MCF 10A (cell line): ENCODE measurements at regions of chr12 and their contacts with region 1.

Region 1: GRCh38 chr12:8609061-8609570 is 3.5 kb downstream of the AICDA start:
- DNase-seq: peak; percentile 55
- H3K4me3 Mint-ChIP-seq: peak overlapping the region; percentile 63
- H3K27ac Mint-ChIP-seq: no peak overlapping the region
- H3K4me1 Mint-ChIP-seq: peaks cover 10% of the 10 kb centered on the region
- H3K27me3 Mint-ChIP-seq: peaks cover 36% of the 10 kb centered on the region
- CTCF ChIP-seq: peak; percentile 75

Region 2: GRCh38 chr12:8549381-8549780 is 59.7 kb before region 1 on chr12:
- CTCF ChIA-PET with region 1: interaction called, 135 read pairs
- POLR2A ChIA-PET with region 1: no interaction called
- intact Hi-C with region 1: loop called (anchors 1 kb)
- DNase-seq: no peak
- H3K4me3 Mint-ChIP-seq: no peak overlapping the region
- H3K27ac Mint-ChIP-seq: no peak overlapping the region
- H3K4me1 Mint-ChIP-seq: peaks cover 2% of the 10 kb centered on the region
- H3K27me3 Mint-ChIP-seq: peaks cover 30% of the 10 kb centered on the region
- CTCF ChIP-seq: no peak

Region 3: DNA sequence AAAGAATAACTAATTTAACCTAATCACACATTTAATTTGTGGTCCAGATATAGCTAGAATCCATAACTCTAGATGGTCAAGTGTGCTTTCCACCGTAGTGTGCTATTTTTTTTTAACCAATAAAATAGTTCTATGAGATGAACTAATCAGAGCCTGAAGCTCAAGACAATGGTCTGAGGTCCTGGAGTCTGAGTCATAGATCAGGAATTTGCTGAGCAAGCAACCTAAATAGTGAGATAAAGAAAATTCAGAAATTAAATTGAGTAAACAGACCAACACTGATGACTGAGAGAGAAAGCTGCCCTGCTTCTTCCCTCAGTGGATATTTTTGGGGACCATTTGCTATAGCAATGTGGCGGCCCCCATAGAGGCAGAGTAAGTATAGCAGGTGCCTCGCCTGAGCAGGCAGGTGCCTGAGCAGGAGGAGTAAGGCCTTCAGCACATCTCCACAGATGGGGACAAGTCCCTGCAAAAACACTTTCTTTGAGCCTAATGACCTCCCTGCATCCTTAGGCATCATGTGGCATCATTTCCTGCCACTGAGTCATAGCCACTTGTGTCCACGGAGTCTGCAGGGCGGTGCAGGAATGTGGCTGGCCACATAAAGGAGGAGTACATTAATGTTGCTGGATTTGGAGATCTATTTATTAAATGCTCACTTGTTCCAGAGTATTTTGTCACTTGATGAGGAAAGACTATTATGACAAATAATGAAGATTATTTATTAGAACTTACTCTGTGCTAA is 54.5 kb before region 1 on chr12:
- CTCF ChIA-PET with region 1: interaction called, 32 read pairs
- POLR2A ChIA-PET with region 1: no interaction called
- intact Hi-C with region 1: no loop called
- DNase-seq: peak; percentile 35
- H3K4me3 Mint-ChIP-seq: no peak overlapping the region
- H3K27ac Mint-ChIP-seq: no peak overlapping the region
- H3K4me1 Mint-ChIP-seq: peaks cover 6% of the 10 kb centered on the region
- H3K27me3 Mint-ChIP-seq: no peaks in the 10 kb centered on the region
- CTCF ChIP-seq: no peak

Region 4: GRCh38 chr12:8590842-8591550 is 18.1 kb before region 1 on chr12:
- CTCF ChIA-PET with region 1: interaction called, 20 read pairs
- POLR2A ChIA-PET with region 1: no interaction called
- intact Hi-C with region 1: no loop called
- DNase-seq: peak; percentile 41
- H3K4me3 Mint-ChIP-seq: no peak overlapping the region
- H3K27ac Mint-ChIP-seq: no peak overlapping the region
- H3K4me1 Mint-ChIP-seq: no peaks in the 10 kb centered on the region
- H3K27me3 Mint-ChIP-seq: no peaks in the 10 kb centered on the region
- CTCF ChIP-seq: no peak

Region 5: DNA sequence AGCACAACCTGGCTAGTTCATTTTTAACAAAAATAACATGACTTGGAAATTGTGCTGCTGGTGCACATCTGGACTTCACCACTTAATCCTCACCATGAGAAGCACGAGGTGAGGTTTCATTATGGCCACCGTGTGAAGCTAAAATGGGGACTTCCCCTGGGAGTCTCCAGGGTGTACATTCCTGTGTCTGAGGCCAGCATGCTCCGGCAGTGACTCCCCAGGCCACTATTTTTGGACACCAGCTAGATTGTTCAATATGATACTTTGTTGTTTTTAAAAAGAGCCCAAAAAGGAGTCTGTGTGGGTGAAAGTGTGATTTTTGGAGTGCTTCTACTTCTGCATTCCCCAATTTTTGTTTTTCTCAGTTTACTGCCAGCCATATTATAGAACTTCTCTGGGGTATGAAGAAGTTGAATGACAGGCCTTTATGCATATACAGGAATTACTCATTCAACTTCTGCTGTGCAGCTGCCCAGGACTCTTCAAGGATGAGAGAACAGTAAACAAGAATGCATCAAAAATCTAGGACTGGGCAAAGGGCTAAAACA is 20.4 kb after region 1 on chr12:
- CTCF ChIA-PET with region 1: interaction called, 11 read pairs
- POLR2A ChIA-PET with region 1: no interaction called
- intact Hi-C with region 1: no loop called
- DNase-seq: peak; percentile 22
- H3K4me3 Mint-ChIP-seq: no peak overlapping the region
- H3K27ac Mint-ChIP-seq: no peak overlapping the region
- H3K4me1 Mint-ChIP-seq: peaks cover 11% of the 10 kb centered on the region
- H3K27me3 Mint-ChIP-seq: no peaks in the 10 kb centered on the region
- CTCF ChIP-seq: no peak

Region 6: DNA sequence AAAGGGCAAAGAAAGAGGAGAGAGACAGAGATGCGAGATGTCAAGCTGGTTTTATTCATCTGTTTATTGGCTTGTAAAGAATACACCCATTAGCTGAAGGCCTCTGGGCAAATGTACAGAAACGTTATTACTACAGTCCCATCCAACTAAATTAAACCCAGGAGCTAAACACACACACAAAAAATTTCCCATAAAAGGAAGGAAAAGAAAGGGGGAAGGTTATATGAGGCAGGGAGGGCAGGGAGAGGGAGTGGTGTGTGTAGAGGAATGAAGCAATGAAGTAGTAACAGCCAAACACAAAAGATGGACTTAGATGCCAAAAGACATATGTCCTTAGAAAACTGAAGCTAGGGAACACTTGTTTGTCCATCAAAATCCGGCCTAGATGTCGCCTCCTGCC is 56.6 kb after region 1 on chr12:
- CTCF ChIA-PET with region 1: no interaction called
- POLR2A ChIA-PET with region 1: no interaction called
- intact Hi-C with region 1: no loop called
- DNase-seq: no peak
- H3K4me3 Mint-ChIP-seq: no peak overlapping the region
- H3K27ac Mint-ChIP-seq: peak overlapping the region; percentile 4
- H3K4me1 Mint-ChIP-seq: peaks cover 5% of the 10 kb centered on the region
- H3K27me3 Mint-ChIP-seq: no peaks in the 10 kb centered on the region
- CTCF ChIP-seq: no peak

Region 7: DNA sequence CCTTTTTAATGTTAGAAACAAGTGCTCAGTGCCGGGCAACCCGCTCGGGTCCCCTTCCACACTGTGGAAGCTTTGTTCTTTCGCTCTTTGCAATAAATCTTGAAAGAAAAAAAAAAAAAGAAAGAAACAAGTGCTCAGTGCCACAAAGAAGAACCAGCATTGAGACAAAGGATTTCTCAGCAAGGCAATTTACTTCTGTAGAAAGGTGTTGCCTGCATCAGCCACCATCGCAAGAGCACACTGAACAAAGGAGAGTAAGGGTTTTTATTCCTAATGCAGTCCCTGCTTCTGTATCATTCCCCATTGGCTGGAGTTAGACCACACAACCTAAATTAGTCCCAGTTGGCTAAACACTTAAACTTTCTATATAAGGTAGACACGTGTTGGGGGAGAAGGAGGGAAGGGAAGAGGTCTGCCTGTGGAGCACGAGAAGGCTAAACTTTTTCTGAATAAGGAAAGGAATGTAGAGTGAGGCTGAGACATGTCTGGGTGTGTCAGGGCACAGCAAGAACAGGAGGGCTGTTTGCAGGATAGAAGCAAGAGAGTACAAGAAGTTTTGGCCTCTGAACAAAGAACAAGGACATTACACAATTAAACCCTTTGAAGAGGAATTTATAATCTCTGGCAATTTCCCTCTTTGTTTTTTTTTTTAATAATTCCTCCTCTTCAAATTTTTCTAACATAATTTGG is 1293.6 kb after region 1 on chr12:
- CTCF ChIA-PET with region 1: no interaction called
- POLR2A ChIA-PET with region 1: no interaction called
- intact Hi-C with region 1: no loop called
- DNase-seq: peak; percentile 15
- H3K4me3 Mint-ChIP-seq: no peak overlapping the region
- H3K27ac Mint-ChIP-seq: peak overlapping the region; percentile 51
- H3K4me1 Mint-ChIP-seq: no peaks in the 10 kb centered on the region
- H3K27me3 Mint-ChIP-seq: no peaks in the 10 kb centered on the region
- CTCF ChIP-seq: no peak